Caco-2 (cell line): ENCODE measurements at regions of chr10 and their contacts with region 1.

Region 1: DNA sequence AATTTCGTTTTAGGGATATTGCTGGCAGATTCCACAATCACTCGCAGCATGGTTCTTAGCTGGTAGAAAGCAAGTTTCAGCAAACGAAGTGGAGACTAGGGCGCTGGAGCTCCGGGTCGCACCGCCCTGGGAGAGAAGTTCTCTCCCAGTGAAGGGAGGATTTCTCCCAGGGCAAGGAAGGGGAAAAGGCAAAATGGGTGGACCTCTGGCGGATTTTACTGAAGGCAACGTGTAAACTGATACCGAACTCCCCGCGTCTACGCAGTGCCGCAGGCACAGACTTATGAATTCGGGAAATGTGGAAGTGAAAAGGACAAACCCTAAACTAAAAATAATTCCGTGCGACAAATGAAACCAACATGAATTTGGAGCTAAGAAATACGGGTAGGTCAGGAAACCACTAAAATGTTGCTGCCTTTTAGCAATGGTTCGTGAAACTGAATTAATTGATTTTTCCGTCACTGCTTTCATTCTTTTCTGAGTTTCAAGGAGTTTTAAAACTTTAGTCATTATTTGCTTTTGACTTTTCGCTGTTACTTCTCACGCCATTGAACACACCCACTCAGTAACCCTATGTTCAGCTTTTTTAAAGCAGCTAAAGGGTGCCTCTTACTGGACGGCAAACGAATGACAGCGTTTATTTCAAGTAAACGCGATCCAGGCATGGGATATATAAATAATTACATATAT is at the start of gene MYOF:
- DNase-seq: peak; percentile 76 to 78
- H3K4me3 ChIP-seq: peak within 1 kb of the TSS; percentile 56
- H3K4me3 Mint-ChIP-seq: peak within 1 kb of the TSS; percentile 92
- H3K27ac Mint-ChIP-seq: peak within 1 kb of the TSS; percentile 94
- H3K4me1 ChIP-seq: peaks cover 21% of the 10 kb centered on the region
- H3K4me1 Mint-ChIP-seq: peaks cover 23% of the 10 kb centered on the region
- H3K27me3 ChIP-seq: no peaks in the 10 kb centered on the region
- H3K27me3 Mint-ChIP-seq: no peaks in the 10 kb centered on the region
- CTCF ChIP-seq: peak; percentile 71
- total RNA-seq, gene MYOF: 148 and 176 TPM in 2 replicates

Region 2: GRCh38 chr10:93288654-93289634 is 193.3 kb before region 1 on chr10:
- CTCF ChIA-PET with region 1: no interaction called
- POLR2A ChIA-PET with region 1: no interaction called
- intact Hi-C with region 1: no loop called
- DNase-seq: peak; percentile 93 to 96
- H3K4me3 ChIP-seq: no peak overlapping the region
- H3K4me3 Mint-ChIP-seq: peak overlapping the region; percentile 55
- H3K27ac Mint-ChIP-seq: peak overlapping the region; percentile 92
- H3K4me1 ChIP-seq: peaks cover 45% of the 10 kb centered on the region
- H3K4me1 Mint-ChIP-seq: peaks cover 34% of the 10 kb centered on the region
- H3K27me3 ChIP-seq: no peaks in the 10 kb centered on the region
- H3K27me3 Mint-ChIP-seq: no peaks in the 10 kb centered on the region
- CTCF ChIP-seq: peak; percentile 77 to 91

Region 3: GRCh38 chr10:93417921-93418320 is 64.4 kb before region 1 on chr10:
- CTCF ChIA-PET with region 1: interaction called, 6 read pairs
- POLR2A ChIA-PET with region 1: no interaction called
- intact Hi-C with region 1: loop called (anchors 1 kb)
- DNase-seq: peak; percentile 84 to 85
- H3K4me3 ChIP-seq: no peak overlapping the region
- H3K4me3 Mint-ChIP-seq: peak overlapping the region; percentile 62
- H3K27ac Mint-ChIP-seq: peak overlapping the region; percentile 99
- H3K4me1 ChIP-seq: peaks cover 65% of the 10 kb centered on the region
- H3K4me1 Mint-ChIP-seq: peaks cover 55% of the 10 kb centered on the region
- H3K27me3 ChIP-seq: no peaks in the 10 kb centered on the region
- H3K27me3 Mint-ChIP-seq: no peaks in the 10 kb centered on the region
- CTCF ChIP-seq: no peak

Region 4: GRCh38 chr10:93445097-93445960 is 37.0 kb before region 1 on chr10:
- CTCF ChIA-PET with region 1: interaction called, 16 read pairs
- POLR2A ChIA-PET with region 1: interaction called, 15 read pairs
- intact Hi-C with region 1: loop called (anchors 1 kb)
- DNase-seq: peak; percentile 97 to 98
- H3K4me3 ChIP-seq: no peak overlapping the region
- H3K4me3 Mint-ChIP-seq: peak overlapping the region; percentile 60
- H3K27ac Mint-ChIP-seq: peak overlapping the region; percentile 96
- H3K4me1 ChIP-seq: peaks cover 60% of the 10 kb centered on the region
- H3K4me1 Mint-ChIP-seq: peaks cover 68% of the 10 kb centered on the region
- H3K27me3 ChIP-seq: no peaks in the 10 kb centered on the region
- H3K27me3 Mint-ChIP-seq: no peaks in the 10 kb centered on the region
- CTCF ChIP-seq: no peak

Region 5: DNA sequence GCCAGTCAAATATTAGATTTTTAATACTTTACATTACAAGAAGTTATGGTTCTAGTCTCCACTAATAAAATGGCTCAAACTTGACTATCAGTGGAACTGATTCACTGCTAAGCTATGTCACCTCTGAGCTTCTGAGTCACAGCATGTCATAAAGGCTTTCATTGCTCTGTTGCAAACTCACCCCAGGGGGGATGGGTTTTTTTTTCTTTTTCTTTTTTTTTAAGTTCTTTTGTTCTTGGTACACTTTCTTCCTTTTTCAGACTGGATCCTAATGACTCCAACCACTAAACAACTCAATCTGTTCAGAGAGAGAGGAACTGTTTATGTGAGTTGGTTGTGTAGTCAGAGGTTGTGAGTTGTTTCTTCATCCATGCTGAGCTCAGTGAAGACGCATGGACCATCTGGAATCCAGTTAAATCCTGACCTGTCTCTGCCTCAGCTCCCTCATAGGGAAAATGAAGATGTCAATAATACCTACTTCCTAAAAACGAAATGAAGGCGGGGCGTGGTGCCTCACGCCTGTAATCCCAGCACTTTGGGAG is 11.1 kb before region 1 on chr10:
- CTCF ChIA-PET with region 1: interaction called, 15 read pairs
- POLR2A ChIA-PET with region 1: interaction called, 8 read pairs
- intact Hi-C with region 1: no loop called
- DNase-seq: peak; percentile 61 to 72
- H3K4me3 ChIP-seq: no peak overlapping the region
- H3K4me3 Mint-ChIP-seq: peak overlapping the region; percentile 37
- H3K27ac Mint-ChIP-seq: peak overlapping the region; percentile 95
- H3K4me1 ChIP-seq: peaks cover 88% of the 10 kb centered on the region
- H3K4me1 Mint-ChIP-seq: peaks cover 51% of the 10 kb centered on the region
- H3K27me3 ChIP-seq: no peaks in the 10 kb centered on the region
- H3K27me3 Mint-ChIP-seq: no peaks in the 10 kb centered on the region
- CTCF ChIP-seq: no peak

Region 6: DNA sequence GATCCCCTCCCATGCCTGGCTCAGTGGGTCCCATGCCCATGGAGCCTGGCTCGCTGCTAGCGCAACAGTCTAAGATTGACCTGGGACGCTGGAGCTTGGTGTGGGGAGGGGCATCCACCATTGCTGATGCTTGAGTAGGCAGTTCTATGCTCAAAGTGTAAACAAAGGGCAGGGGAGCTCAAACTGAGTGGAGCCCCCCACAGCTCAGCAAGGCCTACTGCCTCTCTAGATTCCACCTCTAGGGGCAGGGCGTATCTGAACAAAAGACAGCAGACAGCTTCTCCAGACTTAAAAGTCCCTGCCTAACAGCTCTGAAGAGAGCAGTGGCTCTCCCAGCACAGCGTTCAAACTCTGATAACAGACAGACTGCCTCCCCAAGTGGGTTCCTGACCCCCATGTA is 53.0 kb after region 1 on chr10:
- CTCF ChIA-PET with region 1: no interaction called
- POLR2A ChIA-PET with region 1: no interaction called
- intact Hi-C with region 1: no loop called
- DNase-seq: no peak
- H3K4me3 ChIP-seq: no peak overlapping the region
- H3K4me3 Mint-ChIP-seq: no peak overlapping the region
- H3K27ac Mint-ChIP-seq: no peak overlapping the region
- H3K4me1 ChIP-seq: no peaks in the 10 kb centered on the region
- H3K4me1 Mint-ChIP-seq: peaks cover 6% of the 10 kb centered on the region
- H3K27me3 ChIP-seq: no peaks in the 10 kb centered on the region
- H3K27me3 Mint-ChIP-seq: no peaks in the 10 kb centered on the region
- CTCF ChIP-seq: no peak

Region 7: DNA sequence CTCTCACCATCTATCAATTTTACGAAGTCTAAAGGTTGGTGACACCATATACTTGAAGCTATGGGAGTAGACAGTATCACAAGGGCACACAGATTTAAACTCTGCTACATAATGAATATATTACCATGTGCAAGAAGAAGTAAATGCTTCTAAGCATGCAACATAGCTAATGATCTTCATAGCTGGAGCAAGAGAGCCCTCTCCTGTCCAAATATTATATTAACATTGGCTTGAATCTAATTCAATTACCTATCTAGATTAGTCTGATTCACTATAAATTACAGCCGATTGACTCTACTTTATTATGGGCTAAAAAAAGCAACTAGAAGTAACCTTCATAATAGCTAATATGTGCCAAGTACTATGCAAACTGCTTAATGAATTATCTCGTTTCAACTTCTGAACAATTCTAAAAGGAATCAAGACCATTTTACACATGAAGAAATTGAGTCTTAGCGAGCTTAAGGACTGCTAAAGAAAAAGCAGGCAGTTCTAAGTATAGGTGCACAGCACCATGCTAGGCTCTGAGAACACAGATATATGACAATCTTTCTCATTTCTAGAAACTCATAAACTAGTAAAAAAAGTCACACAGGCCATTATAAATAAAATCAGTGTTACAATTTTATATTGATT is 198.2 kb after region 1 on chr10:
- CTCF ChIA-PET with region 1: interaction called, 18 read pairs
- POLR2A ChIA-PET with region 1: no interaction called
- intact Hi-C with region 1: loop called (anchors 1 kb)
- DNase-seq: peak in 1 of 2 experiments; percentile 56
- H3K4me3 ChIP-seq: no peak overlapping the region
- H3K4me3 Mint-ChIP-seq: no peak overlapping the region
- H3K27ac Mint-ChIP-seq: no peak overlapping the region
- H3K4me1 ChIP-seq: peaks cover 16% of the 10 kb centered on the region; the same call in 1 of the 2 replicates
- H3K4me1 Mint-ChIP-seq: peaks cover 7% of the 10 kb centered on the region
- H3K27me3 ChIP-seq: no peaks in the 10 kb centered on the region
- H3K27me3 Mint-ChIP-seq: no peaks in the 10 kb centered on the region
- CTCF ChIP-seq: peak; percentile 30 to 66